Activated B cell treated with CpG ODN at 0.5 μM for 24 hours (primary cell): ENCODE measurements at regions of chr6 and their contacts with region 1.

Region 1: DNA sequence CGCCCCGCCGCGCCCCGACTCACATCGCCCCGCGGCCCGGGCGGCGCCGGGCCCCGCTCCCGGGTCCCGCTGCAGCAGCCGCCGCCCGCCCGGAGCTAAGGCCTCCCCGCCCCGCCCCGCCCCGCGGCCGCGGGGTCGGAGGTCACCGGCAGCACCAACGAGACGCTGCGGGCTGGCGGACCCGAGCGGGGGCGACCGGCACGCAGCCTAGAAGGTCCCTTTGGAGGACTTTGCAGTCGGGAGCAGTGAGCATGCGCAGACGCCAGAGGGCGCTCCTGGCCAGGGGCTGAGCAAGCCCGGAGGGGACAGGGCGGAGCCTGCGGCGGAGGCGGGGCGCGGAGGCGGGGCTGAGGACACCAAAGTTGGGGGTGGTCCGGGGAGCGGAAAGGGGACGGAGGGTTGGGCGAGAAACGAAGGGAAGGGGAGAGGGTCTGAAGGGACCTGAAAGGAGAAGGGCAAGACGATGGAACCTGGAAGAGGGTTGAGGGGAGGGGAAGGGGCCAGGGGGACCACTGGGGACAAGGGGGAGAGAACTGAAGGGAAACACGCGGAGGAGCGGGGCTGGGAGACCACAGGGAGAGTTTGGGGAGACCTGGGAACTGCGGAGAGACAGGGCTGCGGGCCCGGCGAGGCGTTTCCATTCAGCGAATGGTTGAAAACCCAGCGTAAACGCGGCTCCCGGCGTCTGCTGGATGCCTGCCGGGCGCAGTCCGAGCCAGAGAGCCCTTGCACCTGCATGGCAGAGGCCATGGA is at the start of gene FRS3:
- DNase-seq: peak; percentile 100
- ATAC-seq: peak; percentile 95
- H3K4me3 Mint-ChIP-seq: peak within 1 kb of the TSS; percentile 93
- H3K27ac Mint-ChIP-seq: peak within 1 kb of the TSS; percentile 63
- H3K4me1 Mint-ChIP-seq: peaks cover 25% of the 10 kb centered on the region
- H3K27me3 Mint-ChIP-seq: no peaks in the 10 kb centered on the region
- CTCF ChIP-seq: no peak
- total RNA-seq, gene FRS3: 6.5 and 6.7 TPM in 2 replicates

Region 2: DNA sequence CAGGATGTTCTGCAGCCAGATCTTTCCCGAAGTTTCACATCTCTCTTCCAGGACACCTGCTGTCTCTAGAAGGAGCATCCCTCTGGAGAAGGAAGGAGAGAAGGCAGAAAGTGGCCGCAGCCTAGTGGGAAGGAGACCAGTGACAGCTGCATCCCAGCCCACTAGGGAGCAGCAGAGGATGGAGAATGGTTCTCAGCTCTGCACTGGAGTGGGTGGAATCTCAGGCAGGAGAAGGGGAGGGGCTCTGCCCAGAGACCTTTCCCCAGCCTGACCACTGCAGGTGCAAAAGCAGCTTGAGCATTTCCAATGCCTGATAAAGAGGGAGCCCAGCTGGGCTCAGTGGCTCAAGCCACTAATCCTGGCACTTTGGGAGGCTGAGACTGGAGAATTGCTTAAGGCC is 412.3 kb before region 1 on chr6:
- CTCF ChIA-PET with region 1: no interaction called
- POLR2A ChIA-PET with region 1: interaction called, 6 read pairs
- intact Hi-C with region 1: loop called (anchors 2 kb)
- DNase-seq: no peak
- ATAC-seq: no peak
- H3K4me3 Mint-ChIP-seq: no peak overlapping the region
- H3K27ac Mint-ChIP-seq: no peak overlapping the region
- H3K4me1 Mint-ChIP-seq: peaks cover 19% of the 10 kb centered on the region
- H3K27me3 Mint-ChIP-seq: peaks cover 55% of the 10 kb centered on the region
- CTCF ChIP-seq: no peak

Region 3: DNA sequence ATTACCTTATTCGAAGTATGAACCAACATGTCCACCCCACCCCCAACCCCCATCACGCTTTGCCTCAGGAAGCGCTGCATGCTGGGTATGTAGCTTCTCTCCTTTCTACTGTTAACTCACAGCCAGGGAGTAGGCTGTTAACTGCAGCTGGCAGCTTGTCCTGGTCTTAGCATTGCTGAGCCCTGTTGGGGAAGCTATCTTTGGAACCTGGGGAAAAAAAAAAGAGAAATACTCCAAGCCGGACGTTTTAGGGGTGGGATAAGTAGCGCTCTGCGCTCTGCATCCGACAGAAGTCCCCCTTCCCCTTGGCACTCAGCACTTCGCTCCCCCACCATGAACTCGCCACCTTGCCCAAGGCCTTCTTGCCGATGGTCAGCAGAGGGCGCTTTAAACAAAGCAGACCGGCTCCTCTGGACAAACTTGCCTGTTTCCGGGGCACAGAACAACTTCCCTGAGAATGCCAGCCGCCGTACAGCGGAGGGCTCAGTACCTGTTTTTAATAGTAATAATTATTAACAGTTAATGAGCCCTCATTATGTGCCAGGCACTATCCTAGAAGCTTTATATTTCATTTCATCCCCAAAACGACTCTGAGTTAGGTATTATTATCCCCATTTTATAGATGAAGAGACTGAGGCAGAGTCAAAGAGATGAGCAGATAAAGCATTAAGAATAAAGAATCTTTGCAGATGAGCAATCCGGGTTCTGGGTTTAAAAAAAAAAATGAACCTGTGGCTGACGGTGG is 176.9 kb before region 1 on chr6:
- CTCF ChIA-PET with region 1: interaction called, 27 read pairs
- POLR2A ChIA-PET with region 1: interaction called, 13 read pairs
- intact Hi-C with region 1: loop called (anchors 1 kb)
- DNase-seq: peak; percentile 55
- ATAC-seq: peak; percentile 85
- H3K4me3 Mint-ChIP-seq: peak overlapping the region; percentile 46
- H3K27ac Mint-ChIP-seq: no peak overlapping the region
- H3K4me1 Mint-ChIP-seq: peaks cover 10% of the 10 kb centered on the region
- H3K27me3 Mint-ChIP-seq: no peaks in the 10 kb centered on the region
- CTCF ChIP-seq: no peak

Region 4: DNA sequence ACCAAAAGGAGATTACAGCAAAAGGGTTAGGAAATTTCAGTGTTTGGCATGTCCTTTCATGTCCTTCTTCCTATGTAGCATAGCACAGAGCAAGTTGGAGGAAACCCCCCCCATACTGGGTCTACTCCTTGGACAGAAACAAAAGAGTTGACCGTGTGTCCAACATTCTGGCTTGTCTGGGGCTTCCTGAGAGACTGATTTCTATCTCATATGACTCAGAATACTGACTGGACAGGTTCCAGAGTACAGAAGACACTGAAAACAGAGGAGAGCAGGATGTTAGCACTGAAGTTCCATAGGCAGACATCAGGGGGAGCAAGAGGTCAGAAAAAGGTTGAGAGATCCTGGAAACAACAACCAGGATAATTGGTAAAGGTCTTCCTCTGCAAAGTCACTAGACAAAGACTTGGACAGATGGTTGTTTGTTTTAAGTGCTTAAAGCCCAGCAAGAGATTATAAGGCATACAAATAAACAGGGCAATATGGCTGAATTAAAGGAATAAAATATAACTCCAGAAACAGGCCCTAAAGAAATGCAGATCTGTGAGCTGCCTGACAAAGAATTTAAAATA is 66.8 kb after region 1 on chr6:
- CTCF ChIA-PET with region 1: no interaction called
- POLR2A ChIA-PET with region 1: no interaction called
- intact Hi-C with region 1: loop called (anchors 1 kb)
- DNase-seq: no peak
- ATAC-seq: peak; percentile 72
- H3K4me3 Mint-ChIP-seq: no peak overlapping the region
- H3K27ac Mint-ChIP-seq: no peak overlapping the region
- H3K4me1 Mint-ChIP-seq: no peaks in the 10 kb centered on the region
- H3K27me3 Mint-ChIP-seq: no peaks in the 10 kb centered on the region
- CTCF ChIP-seq: no peak

Region 5: DNA sequence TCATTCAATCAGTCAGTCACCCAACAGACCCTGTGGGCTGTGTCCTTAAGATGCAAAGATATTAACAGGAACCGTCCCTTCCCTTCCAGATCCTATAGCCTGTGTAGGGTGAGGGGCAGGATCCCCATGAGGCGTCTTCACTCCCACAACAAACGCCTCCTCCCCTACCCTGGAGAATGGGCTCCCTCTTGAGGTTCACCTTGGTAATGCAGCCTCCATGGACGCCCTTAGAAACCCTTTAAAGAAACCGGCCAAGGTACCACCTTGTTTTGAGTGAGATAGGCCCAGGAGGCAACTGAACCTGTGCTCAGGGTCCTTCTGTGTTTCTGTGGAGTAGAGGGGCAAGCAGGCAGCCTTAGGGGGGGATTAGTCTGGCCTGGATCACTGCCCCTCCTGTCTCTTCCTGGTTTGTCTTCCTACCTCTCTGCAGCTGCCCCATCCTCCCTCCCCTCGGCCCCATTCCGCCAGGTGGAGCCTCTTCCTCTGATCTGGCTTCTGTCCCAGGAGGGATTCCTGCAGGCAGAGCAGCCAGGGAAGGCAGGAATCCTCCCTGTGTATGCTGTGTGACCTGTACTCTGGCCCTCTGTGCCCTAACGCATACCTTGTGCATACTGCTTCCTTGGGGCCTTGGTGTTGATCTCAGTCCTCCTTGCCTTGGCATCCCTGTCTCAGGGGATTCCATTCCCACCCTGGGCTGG is 386.6 kb after region 1 on chr6:
- CTCF ChIA-PET with region 1: no interaction called
- POLR2A ChIA-PET with region 1: no interaction called
- intact Hi-C with region 1: loop called (anchors 1 kb)
- DNase-seq: peak; percentile 50
- ATAC-seq: peak; percentile 91
- H3K4me3 Mint-ChIP-seq: no peak overlapping the region
- H3K27ac Mint-ChIP-seq: peak overlapping the region; percentile 31
- H3K4me1 Mint-ChIP-seq: no peaks in the 10 kb centered on the region
- H3K27me3 Mint-ChIP-seq: peaks cover 6% of the 10 kb centered on the region
- CTCF ChIP-seq: no peak

Region 6: DNA sequence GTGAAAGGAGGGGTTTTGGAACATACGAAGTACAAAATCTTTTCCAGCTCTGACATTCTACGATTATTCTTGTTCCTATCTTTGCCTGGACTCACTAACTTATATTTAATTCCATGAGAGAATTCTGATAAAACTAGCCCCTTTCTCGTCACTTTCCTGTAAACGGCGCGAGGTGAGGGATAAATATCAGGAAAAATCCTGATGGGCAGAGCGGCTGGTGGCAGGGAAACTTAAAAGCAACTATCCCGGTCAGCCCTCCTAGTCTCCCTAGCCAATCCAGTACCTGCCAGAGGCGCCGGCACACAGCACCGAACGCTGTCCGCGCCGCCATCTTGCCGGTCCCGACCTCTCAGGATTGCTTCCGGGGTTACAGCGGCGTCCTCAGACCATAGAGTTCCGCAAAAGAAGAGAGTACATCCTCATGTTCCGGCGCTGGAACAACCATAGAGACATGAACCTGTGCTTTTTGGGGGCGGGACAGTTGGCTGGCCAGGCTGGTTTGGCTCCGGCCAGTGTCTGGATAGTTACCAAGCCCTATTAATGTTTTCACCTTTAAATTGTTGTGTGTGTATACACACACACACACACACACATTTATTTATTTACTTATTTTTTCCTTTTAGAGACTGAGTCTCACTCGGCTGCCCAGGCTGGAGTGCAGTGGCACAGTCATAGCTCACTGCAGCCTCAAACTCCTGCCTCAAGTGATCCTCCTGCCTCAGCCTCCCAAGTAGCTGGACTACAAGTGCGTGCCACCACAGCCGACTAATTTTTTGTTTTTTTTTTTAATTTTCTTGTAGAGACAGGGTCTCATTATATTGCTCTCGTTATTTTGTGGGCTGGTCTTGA is 437.8 kb after region 1 on chr6 and contains the start of gene MRPS10:
- CTCF ChIA-PET with region 1: interaction called, 4 read pairs
- POLR2A ChIA-PET with region 1: no interaction called
- intact Hi-C with region 1: loop called (anchors 1 kb)
- DNase-seq: peak; percentile 76
- ATAC-seq: peak; percentile 99
- H3K4me3 Mint-ChIP-seq: peak within 1 kb of the TSS; percentile 99
- H3K27ac Mint-ChIP-seq: peak within 1 kb of the TSS; percentile 95
- H3K4me1 Mint-ChIP-seq: peaks cover 30% of the 10 kb centered on the region
- H3K27me3 Mint-ChIP-seq: no peaks in the 10 kb centered on the region
- CTCF ChIP-seq: no peak
- total RNA-seq, gene MRPS10: 35.7 and 37.0 TPM in 2 replicates